Calu3 (cell line): ENCODE measurements at regions of chr7 and their contacts with region 1.

Region 1: DNA sequence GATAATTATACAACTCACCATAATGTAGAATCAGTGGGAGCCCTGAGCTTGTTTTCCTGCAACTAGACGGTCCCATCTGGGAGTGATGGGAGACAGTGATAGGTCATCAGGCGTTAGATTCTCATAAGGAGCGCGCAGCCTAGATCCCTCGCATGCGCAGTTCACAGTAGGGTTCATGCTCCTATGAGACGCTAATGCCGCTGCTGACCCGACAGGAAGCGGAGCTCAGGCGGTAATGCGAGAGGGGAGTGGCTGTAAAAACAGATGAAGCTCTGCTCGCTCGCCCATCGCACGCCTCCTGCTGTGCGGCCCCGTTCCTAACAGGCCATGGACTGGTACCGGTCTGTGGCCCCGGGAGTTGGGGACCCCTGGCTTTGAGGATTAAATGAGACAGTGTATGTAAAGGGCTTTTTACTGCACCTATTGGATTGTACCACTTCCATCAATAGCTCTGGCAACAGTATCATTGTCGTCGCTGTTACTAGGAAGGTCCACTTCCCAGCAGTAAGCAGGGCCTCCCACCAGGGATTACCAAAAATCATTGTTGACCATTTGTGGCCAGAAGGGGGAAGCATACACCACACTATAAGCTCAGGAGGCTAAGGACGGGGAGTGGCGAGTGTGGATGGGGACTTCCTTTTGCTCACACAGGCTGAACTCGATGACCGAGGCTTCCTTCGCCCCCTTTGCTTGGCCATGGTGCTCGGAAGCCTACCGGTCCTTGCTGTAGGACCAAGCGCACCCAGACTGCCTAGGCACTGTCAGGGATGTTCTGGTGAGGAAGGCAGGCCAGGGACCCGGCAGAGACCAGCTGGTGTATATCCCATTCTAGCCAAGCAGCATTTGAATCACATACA is 26.4 kb downstream of the AKR1B1 start:
- DNase-seq: peak; percentile 84
- H3K4me3 Mint-ChIP-seq: peak overlapping the region; percentile 72
- H3K27ac Mint-ChIP-seq: peak overlapping the region; percentile 43
- H3K4me1 Mint-ChIP-seq: peaks cover 12% of the 10 kb centered on the region
- H3K27me3 Mint-ChIP-seq: no peaks in the 10 kb centered on the region
- CTCF ChIP-seq: peak; percentile 86

Region 2: DNA sequence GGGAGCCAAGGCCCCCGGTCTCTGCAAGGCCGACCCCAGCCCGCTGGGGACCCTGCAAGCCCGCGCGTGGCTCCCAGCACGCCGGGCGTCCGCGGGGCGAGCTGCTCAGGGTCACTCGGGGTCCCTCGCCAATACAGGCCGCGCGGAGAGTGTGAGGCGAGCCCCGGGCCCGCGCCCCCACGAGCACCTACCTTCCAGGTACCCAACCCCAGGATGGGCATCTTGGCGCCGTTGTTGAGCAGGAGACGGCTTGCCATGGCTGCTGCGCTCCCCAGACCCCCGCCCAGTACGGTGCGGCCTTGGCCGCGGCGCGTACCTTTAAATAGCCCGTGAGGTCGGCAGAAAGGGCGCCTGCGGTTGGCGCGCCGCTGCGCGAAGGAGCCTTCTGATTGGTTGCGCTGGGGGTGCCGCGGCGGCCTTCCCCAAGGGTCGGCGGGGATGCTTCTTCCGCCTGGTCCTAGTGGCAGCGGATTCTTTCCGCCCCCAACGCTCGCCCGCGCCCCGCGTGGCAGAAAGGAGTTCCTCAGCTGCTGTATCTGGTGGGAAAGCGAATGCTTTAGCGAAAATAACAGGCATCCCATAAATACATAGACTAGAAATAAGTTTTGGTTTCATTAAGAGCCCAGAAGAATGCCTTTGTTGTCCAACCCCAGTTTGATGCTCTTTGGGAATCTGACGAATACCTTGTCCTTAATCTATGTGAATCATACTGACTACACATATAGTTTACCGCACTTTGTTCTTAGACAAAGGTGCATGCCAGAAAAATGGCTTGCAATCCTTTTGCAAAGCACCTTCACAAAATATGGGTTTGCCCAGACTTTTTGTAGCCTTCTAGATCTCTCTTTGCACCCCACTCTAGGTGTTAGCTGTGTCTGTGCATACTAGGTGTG is 26.5 kb after region 1 on chr7 and contains the start of gene AKR1B1:
- CTCF ChIA-PET with region 1: interaction called, 11 read pairs
- intact Hi-C with region 1: no loop called
- DNase-seq: peak; percentile 88
- H3K4me3 Mint-ChIP-seq: peak within 1 kb of the TSS; percentile 87
- H3K27ac Mint-ChIP-seq: peak within 1 kb of the TSS; percentile 67
- H3K4me1 Mint-ChIP-seq: peaks cover 34% of the 10 kb centered on the region
- H3K27me3 Mint-ChIP-seq: no peaks in the 10 kb centered on the region
- CTCF ChIP-seq: peak; percentile 22
- total RNA-seq, gene AKR1B1: 115 and 139 TPM in 2 replicates

Region 3: GRCh38 chr7:134514663-134515062 is 82.1 kb after region 1 on chr7:
- CTCF ChIA-PET with region 1: interaction called, 62 read pairs
- intact Hi-C with region 1: loop called (anchors 1 kb)
- DNase-seq: peak; percentile 66
- H3K4me3 Mint-ChIP-seq: no peak overlapping the region
- H3K27ac Mint-ChIP-seq: no peak overlapping the region
- H3K4me1 Mint-ChIP-seq: peaks cover 40% of the 10 kb centered on the region
- H3K27me3 Mint-ChIP-seq: no peaks in the 10 kb centered on the region
- CTCF ChIP-seq: peak; percentile 71

Region 4: GRCh38 chr7:134605973-134606923 is 173.7 kb after region 1 on chr7:
- CTCF ChIA-PET with region 1: interaction called, 7 read pairs
- intact Hi-C with region 1: loop called (anchors 1 kb)
- DNase-seq: peak; percentile 71
- H3K4me3 Mint-ChIP-seq: peak overlapping the region; percentile 31
- H3K27ac Mint-ChIP-seq: peak overlapping the region; percentile 19
- H3K4me1 Mint-ChIP-seq: peaks cover 32% of the 10 kb centered on the region
- H3K27me3 Mint-ChIP-seq: peaks cover 19% of the 10 kb centered on the region
- CTCF ChIP-seq: peak; percentile 81